HCT116 (cell line): ENCODE measurements at regions of chr15 and their contacts with region 1.

Region 1: DNA sequence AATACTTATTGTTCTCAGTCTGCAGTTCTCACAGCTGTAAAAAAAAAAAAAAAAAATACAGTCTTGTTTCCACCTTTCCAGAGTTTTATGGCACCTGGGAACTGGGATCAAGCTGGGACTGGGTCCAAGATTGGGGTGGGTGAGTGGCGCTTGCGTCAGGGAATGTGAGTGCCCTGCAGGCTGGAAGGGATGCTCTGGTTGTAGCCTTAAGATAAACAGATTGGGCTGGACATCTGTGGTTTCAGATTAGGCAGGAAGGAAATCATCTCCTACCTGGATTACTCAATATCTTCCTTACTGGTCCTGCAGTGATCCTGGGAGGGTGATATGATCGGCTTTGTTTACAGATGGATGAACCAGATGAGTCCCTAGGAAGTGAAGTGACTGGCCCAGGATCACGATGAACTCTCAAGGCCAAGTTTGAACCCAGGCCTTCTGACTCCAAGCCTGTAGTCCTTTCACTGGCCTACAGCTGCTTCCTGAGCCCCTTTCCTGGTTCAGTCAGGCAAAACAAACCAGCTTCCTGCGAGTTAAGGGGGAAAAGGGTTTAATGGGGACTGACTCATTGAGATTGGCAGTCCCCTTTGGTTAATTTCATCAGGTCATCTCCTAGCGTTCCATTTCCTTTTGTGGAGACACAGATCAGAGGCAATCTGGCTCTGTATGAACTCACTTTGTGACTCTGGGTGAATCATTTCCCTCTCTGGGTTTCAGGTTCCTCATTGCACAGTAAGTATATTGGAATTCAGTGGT is 179.8 kb downstream of the THSD4 start:
- DNase-seq: peak; percentile 100
- ATAC-seq: peak; percentile 83
- H3K4me3 ChIP-seq: peak overlapping the region; percentile 1 to 51
- H3K27ac ChIP-seq: peak overlapping the region; percentile 97
- H3K4me1 ChIP-seq: peaks cover 49 to 65% of the 10 kb centered on the region in 2 experiments
- H3K27me3 ChIP-seq: no peaks in the 10 kb centered on the region
- CTCF ChIP-seq: no peak
- POLR2A ChIP-seq: no peak
- RAD21 ChIP-seq: peak; percentile 39; the same call in 1 of the 2 replicates

Region 2: DNA sequence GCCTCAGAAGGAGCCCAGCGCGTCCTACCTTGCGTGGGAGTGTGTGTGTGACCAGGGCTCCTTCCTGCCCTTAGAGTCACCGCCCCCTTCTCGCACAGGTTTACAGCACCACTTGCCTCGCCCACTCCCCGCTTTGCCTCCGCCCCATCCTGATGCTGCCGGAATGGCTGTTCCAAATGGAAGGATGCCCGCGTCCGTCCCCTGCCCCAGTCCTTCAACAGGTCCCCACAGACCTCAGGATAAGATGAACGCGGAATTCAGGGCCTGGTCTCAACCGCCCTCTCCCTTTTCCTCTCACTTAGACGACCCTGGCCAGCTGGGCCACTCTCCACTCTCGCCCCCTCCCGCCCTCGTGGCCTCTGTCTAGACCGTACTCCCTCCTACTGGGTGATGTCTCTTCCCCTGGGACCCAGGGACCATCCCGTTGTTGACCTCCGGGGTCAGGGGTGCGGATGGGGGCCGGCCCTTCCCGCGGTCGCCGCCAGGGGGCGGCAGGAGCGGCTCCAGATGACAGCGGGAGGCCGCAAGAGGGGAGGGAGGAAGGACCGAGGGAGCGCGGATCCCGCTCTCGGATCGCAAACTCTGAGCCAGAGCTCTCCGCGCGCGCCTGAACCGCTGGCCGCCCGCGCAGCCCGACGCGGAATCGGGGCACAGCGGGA is 180.0 kb before region 1 on chr15 and contains the start of gene THSD4:
- CTCF ChIA-PET with region 1: no interaction called
- POLR2A ChIA-PET with region 1: no interaction called
- RAD21 ChIA-PET with region 1: no interaction called
- intact Hi-C with region 1: loop called (anchors 2 kb)
- DNase-seq: no peak
- ATAC-seq: peak; percentile 79
- H3K4me3 ChIP-seq: peak within 1 kb of the TSS; percentile 71 to 72
- H3K27ac ChIP-seq: peak within 1 kb of the TSS; percentile 84
- H3K4me1 ChIP-seq: peaks cover 21 to 31% of the 10 kb centered on the region in 2 experiments
- H3K27me3 ChIP-seq: no peaks in the 10 kb centered on the region
- CTCF ChIP-seq: peak; percentile 64 to 98 (median 97)
- POLR2A ChIP-seq: no peak
- RAD21 ChIP-seq: peak; percentile 66
- total RNA-seq, gene THSD4: 30.5 TPM

Region 3: DNA sequence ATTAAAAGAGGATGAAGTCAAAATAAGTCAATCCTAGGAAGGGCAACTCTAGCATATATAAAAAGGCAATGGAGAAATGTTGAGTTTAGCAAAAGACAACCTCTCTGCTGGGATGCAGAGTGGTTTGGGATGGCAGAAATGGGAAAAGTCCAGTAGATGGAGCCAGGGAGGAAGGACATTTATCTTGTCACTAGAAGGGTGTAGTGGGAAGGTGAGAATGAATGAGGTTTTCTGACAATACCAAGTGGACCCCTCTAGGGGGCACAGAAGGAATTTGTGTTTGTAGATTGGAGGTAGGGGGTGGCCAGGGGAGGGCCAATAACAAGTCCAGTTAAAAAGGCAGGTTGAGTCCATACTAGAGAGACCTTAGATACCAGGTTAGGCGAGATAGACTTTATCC is 99.8 kb before region 1 on chr15:
- CTCF ChIA-PET with region 1: no interaction called
- POLR2A ChIA-PET with region 1: no interaction called
- RAD21 ChIA-PET with region 1: no interaction called
- intact Hi-C with region 1: loop called (anchors 5 kb)
- DNase-seq: peak; percentile 13
- ATAC-seq: peak; percentile 86
- H3K4me3 ChIP-seq: no peak overlapping the region
- H3K27ac ChIP-seq: no peak overlapping the region
- H3K4me1 ChIP-seq: no peaks in the 10 kb centered on the region
- H3K27me3 ChIP-seq: no peaks in the 10 kb centered on the region
- CTCF ChIP-seq: peak; percentile 35 to 62 (median 49); a peak in 5 of 6 replicates
- POLR2A ChIP-seq: no peak
- RAD21 ChIP-seq: peak; percentile 56

Region 4: DNA sequence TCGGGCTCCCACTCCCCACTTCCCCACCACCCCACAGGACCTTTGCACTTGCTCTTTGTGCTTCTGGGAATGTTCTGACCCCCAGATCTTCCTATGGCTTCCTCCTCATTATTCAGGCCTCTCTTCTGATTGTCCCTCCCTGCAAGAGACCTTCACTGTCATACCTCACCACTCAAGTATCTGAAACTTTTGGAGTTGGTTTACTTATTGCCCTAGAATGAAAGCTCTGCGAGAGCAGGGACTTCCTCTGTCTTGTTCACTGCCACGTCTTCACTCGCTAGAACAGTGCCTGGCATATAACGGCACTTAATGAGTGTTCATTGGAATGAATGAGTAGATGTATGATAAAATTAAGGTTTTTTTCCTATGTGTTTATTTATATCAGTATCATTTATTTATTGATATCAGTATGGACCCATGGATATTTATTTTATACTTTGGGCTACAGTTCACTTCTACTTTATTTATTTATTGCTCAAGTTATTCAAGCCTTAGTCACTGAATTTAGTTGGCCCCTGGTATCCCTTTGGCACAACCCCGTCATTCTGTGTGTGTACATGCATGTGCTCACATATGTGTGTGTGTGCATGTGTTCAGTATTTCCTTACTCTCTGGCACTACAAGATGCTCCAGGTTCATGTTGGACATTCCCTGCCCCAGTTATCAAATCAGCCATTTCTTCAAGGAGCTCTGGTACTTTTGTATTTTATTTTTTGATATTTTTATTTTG is 17.8 kb after region 1 on chr15:
- CTCF ChIA-PET with region 1: no interaction called
- POLR2A ChIA-PET with region 1: no interaction called
- RAD21 ChIA-PET with region 1: no interaction called
- intact Hi-C with region 1: no loop called
- DNase-seq: no peak
- ATAC-seq: no peak
- H3K4me3 ChIP-seq: no peak overlapping the region
- H3K27ac ChIP-seq: no peak overlapping the region
- H3K4me1 ChIP-seq: no peaks in the 10 kb centered on the region
- H3K27me3 ChIP-seq: no peaks in the 10 kb centered on the region
- CTCF ChIP-seq: no peak
- POLR2A ChIP-seq: no peak
- RAD21 ChIP-seq: no peak

Region 5: GRCh38 chr15:71743861-71744382 is 448.9 kb after region 1 on chr15:
- CTCF ChIA-PET with region 1: no interaction called
- POLR2A ChIA-PET with region 1: no interaction called
- RAD21 ChIA-PET with region 1: no interaction called
- intact Hi-C with region 1: loop called (anchors 5 kb)
- DNase-seq: no peak
- ATAC-seq: no peak
- H3K4me3 ChIP-seq: no peak overlapping the region
- H3K27ac ChIP-seq: no peak overlapping the region
- H3K4me1 ChIP-seq: peaks cover 27 to 33% of the 10 kb centered on the region in 2 experiments
- H3K27me3 ChIP-seq: no peaks in the 10 kb centered on the region
- CTCF ChIP-seq: peak; percentile 57 to 78 (median 64); a peak in 5 of 6 replicates
- POLR2A ChIP-seq: no peak
- RAD21 ChIP-seq: peak; percentile 71